Tibial artery (tissue), 4 donors: ENCODE measurements at regions of chr12 and their contacts with region 1.

Region 1: DNA sequence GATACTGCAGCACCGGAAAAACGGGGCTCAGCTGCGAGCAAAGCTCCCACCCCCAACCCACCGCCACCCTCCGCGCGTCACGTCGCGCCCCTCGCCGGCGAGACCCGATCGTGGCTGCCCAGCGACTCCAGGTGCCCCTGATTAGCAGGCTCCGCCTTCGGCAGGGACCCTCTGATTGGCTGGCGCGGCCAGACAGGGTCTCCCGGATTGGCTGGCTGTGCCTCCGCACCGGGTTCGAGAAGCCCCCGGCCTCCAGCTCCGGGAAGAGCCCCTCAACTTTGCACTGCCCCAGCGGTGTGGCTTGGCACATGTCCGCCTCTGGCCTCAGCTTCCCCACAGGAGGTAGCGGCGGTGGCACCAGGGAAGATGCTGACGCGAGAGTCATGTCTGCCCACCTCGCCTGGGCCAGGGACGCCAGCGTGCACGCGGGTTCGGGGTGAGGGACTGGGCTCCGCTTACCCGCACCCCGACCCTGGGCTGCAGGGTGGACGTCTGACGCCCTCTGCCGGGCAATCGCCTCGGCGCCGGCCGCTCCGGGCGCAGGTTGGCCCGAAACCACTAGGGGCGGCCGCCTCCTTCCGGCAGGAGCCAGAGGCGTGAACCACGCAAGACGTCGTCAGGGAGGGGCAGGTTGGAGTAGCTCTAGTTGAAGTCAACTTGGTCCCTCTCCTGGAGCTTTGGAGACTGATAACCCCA is 498 bp upstream of the RHOF start:
- DNase-seq: peak; percentile 84 to 93
- H3K4me3 ChIP-seq: peak overlapping the region; percentile 43 to 56
- H3K27ac ChIP-seq: peak overlapping the region; percentile 100
- H3K4me1 ChIP-seq: peaks cover 0 to 60% (median 55%) of the 10 kb centered on the region in 4 donors
- H3K27me3 ChIP-seq: no peaks in the 10 kb centered on the region
- CTCF ChIP-seq: peak; percentile 100

Region 2: GRCh38 chr12:121697098-121697698 is 96.8 kb before region 1 on chr12:
- intact Hi-C with region 1: loop called (anchors 5 kb)
- DNase-seq: no peak
- H3K4me3 ChIP-seq: no peak overlapping the region
- H3K27ac ChIP-seq: no peak overlapping the region
- H3K4me1 ChIP-seq: peaks cover 0 to 6% (median 1%) of the 10 kb centered on the region in 4 donors
- H3K27me3 ChIP-seq: peaks cover 0 to 5% of the 10 kb centered on the region in 2 donors
- CTCF ChIP-seq: peak; percentile 48 to 89

Region 3: DNA sequence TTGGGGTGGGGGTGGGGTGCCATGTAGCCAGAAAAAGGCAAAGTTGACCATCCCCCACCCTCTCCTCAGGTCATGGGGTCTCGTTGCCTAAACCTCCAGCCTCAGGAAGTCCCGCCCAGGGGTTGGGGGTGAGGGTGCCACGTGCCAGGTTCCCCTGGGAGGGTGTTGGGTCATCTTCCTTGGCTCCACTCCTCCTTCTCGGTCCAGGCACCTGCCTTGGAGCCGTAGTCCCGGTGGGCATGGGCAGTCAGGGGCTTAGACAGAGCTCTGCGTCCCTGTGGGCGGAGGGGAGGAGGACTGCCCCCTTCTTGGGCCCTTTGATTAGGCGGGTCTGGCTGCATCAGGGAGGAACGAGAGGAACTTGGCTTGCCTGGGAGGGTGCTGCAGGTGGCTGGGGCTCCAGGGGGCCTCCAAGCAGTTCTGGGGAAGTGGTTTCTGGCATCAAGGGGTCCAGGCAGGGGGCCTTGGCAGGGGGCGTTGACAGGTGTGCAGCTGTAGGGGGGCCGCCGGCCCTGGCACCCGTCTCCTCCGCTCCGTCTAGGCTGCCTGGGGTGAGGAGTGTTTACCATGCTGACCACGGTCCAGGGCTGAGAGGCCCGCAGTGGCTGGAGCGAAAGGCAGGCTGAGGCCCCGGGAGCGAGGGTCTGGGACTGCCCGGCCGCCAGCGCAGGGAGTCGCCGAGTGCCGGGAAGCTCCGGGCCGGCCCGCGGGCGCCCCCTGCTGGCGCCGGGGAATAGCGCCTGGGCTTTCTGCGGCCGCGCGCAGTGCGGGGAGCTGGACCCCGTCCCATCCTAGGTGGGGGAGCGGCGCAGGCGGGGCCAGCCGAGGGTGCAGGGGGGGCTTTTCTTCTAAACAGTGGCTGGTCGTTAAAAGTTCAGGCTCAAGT is 17.7 kb after region 1 on chr12:
- intact Hi-C with region 1: loop called (anchors 1 kb)
- DNase-seq: peak in 1 of 2 donors; percentile 86
- H3K4me3 ChIP-seq: peak overlapping the region; percentile 57
- H3K27ac ChIP-seq: peak overlapping the region; percentile 74 to 88
- H3K4me1 ChIP-seq: peaks cover 0 to 54% (median 52%) of the 10 kb centered on the region in 4 donors
- H3K27me3 ChIP-seq: no peaks in the 10 kb centered on the region
- CTCF ChIP-seq: peak; percentile 98 to 99

Region 4: DNA sequence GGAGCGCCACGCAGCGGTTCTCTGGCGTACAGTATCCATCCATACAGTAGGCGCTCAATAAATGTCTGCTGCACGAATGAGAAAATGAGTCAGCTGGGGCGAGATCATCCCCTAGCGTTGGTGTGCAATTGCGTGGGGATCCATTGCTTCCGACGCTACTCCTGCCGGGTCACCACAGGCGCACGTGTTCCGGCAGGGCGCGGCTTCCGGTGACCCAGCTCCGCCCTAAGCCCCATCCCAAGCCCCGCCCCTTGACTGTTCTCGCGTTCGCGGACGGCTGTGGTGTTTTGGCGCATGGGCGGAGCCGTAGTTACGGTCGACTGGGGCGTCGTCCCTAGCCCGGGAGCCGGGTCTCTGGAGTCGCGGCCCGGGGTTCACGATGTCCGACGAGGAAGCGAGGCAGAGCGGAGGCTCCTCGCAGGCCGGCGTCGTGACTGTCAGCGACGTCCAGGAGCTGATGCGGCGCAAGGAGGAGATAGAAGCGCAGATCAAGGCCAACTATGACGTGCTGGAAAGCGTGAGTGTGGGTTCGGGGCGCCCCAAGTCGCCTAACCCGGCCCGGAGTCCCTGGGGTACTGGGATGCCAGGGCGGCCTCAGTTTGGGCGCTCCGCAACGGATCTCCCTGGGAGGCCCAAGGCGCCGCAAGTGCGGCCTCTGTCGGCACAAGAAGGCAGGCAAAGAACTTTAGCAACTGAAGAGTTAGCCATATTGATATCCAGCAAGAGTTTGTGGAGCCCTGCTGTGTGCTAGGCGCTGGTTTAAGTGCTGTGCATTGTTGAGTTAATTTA is 94.7 kb after region 1 on chr12 and contains the start of gene PSMD9:
- intact Hi-C with region 1: loop called (anchors 5 kb)
- DNase-seq: peak; percentile 96 to 98
- H3K4me3 ChIP-seq: peak within 1 kb of the TSS; percentile 85 to 86
- H3K27ac ChIP-seq: peak within 1 kb of the TSS; percentile 93 to 96
- H3K4me1 ChIP-seq: peaks cover 0 to 41% (median 20%) of the 10 kb centered on the region in 4 donors
- H3K27me3 ChIP-seq: no peaks in the 10 kb centered on the region
- CTCF ChIP-seq: peak; percentile 66 to 75